CD4-positive, alpha-beta memory T cell (primary cell): ENCODE measurements at regions of chr5 and their contacts with region 1.

Region 1: DNA sequence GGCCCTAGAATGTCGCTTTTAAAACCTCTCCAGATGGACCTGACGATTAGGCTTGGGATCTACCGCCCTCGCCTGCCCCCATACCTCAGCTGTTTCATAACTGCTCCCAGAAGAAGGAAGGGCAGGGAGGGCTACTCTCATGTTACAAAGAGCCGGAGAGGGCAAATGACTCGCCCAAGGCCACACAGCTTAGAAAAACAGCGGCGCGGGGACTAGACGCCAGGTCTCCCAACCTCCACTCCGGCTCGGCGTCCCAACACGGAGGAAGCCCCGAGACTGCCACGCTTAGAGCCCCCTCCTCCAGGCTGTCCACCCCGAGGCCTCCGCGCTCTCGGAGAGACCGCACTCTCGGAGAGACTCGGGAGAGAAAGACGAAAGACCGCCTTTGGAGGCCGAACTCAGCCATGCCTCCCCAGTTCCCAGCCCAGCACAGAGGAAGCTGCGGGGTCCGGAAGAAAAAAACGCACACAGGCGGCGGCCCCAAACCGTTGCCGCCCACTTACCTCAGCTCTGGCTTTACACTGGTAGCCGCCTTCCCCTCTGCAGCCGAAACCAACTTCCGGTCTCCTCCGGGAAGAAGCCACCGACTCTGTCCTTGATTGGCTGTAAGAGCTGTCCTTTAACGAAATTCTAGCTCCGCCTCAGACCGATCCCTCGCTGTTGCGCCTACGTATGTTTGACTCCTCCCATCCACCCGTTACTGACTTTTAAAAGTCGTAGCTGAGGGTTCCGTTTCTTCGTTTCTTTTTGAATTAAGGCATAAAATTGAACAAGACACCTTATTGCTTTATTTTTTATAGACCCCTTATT is at the start of gene MED7:
- DNase-seq: peak; percentile 94 to 98 (median 97)
- H3K4me3 ChIP-seq: peak within 1 kb of the TSS; percentile 92 to 94
- H3K4me3 Mint-ChIP-seq: peak within 1 kb of the TSS; percentile 94 to 100 (median 98)
- H3K27ac ChIP-seq: peak within 1 kb of the TSS; percentile 98
- H3K27ac Mint-ChIP-seq: peak within 1 kb of the TSS; percentile 94 to 100 (median 99)
- H3K4me1 ChIP-seq: peaks cover 28% of the 10 kb centered on the region
- H3K4me1 Mint-ChIP-seq: peaks cover 29 to 61% (median 39%) of the 10 kb centered on the region in 4 donors
- H3K27me3 ChIP-seq: no peaks in the 10 kb centered on the region
- H3K27me3 Mint-ChIP-seq: no peaks in the 10 kb centered on the region
- total RNA-seq, gene MED7: 18.9 to 20.3 TPM

Region 2: GRCh38 chr5:157033071-157033583 is 109.4 kb before region 1 on chr5:
- CTCF ChIA-PET with region 1: no interaction called
- POLR2A ChIA-PET with region 1: no interaction called
- intact Hi-C with region 1: no loop called
- DNase-seq: no peak
- H3K4me3 ChIP-seq: no peak overlapping the region
- H3K4me3 Mint-ChIP-seq: no peak overlapping the region
- H3K27ac ChIP-seq: no peak overlapping the region
- H3K27ac Mint-ChIP-seq: peak overlapping the region in 1 of 7 donors; percentile 73
- H3K4me1 ChIP-seq: peaks cover 3% of the 10 kb centered on the region
- H3K4me1 Mint-ChIP-seq: peaks cover 3 to 9% (median 6%) of the 10 kb centered on the region in 4 donors
- H3K27me3 ChIP-seq: no peaks in the 10 kb centered on the region
- H3K27me3 Mint-ChIP-seq: no peaks in the 10 kb centered on the region

Region 3: GRCh38 chr5:157072508-157072907 is 70.0 kb before region 1 on chr5:
- CTCF ChIA-PET with region 1: no interaction called
- POLR2A ChIA-PET with region 1: no interaction called
- intact Hi-C with region 1: no loop called
- DNase-seq: no peak
- H3K4me3 ChIP-seq: no peak overlapping the region
- H3K4me3 Mint-ChIP-seq: no peak overlapping the region
- H3K27ac ChIP-seq: no peak overlapping the region
- H3K27ac Mint-ChIP-seq: no peak overlapping the region
- H3K4me1 ChIP-seq: no peaks in the 10 kb centered on the region
- H3K4me1 Mint-ChIP-seq: no peaks in the 10 kb centered on the region
- H3K27me3 ChIP-seq: no peaks in the 10 kb centered on the region
- H3K27me3 Mint-ChIP-seq: no peaks in the 10 kb centered on the region

Region 4: DNA sequence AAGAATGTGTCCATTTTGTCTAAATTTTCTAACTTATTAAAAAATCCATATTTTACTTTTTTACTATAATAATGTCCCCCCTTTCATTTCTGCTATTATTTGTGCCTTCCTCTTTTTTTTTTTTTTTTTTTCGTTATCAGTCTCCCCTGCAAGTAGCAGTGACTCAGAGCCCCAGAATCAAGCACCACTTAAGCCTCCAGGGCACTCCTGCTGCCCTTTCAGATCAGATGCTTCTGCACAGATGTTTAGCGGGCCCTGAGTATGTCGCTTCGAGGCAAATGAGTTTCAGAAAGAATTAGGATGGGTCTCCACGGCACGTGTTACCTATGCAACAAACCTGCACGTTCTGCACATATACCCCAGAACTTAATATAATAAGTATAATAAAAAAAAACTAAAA is 11.6 kb before region 1 on chr5:
- CTCF ChIA-PET with region 1: interaction called, 12 read pairs
- POLR2A ChIA-PET with region 1: interaction called, 14 read pairs
- intact Hi-C with region 1: no loop called
- DNase-seq: no peak
- H3K4me3 ChIP-seq: no peak overlapping the region
- H3K4me3 Mint-ChIP-seq: no peak overlapping the region
- H3K27ac ChIP-seq: no peak overlapping the region
- H3K27ac Mint-ChIP-seq: no peak overlapping the region
- H3K4me1 ChIP-seq: no peaks in the 10 kb centered on the region
- H3K4me1 Mint-ChIP-seq: peaks cover 6 to 21% (median 9%) of the 10 kb centered on the region in 4 donors
- H3K27me3 ChIP-seq: no peaks in the 10 kb centered on the region
- H3K27me3 Mint-ChIP-seq: no peaks in the 10 kb centered on the region

Region 5: DNA sequence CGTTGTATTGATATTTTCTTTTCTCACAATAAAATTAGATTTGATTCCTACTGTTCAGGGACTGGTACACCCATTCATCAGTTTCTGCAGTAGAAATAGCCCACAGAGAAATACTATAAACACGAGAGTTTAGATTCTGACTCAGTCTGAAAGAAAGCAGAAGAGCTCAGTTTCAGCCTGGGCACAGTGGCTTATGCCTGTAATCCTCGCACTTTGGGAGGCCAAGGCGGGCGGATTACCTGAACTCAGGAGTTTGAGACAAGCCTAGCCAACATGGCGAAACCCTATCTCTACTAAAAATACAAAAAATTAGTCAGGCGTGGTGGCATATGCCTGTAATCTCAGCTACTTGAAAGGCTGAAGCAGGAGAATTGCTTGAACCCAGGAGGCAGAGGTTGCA is 46.7 kb after region 1 on chr5:
- CTCF ChIA-PET with region 1: interaction called, 66 read pairs
- POLR2A ChIA-PET with region 1: interaction called, 51 read pairs
- intact Hi-C with region 1: no loop called
- DNase-seq: no peak
- H3K4me3 ChIP-seq: peak overlapping the region; percentile 44 to 59
- H3K4me3 Mint-ChIP-seq: peak overlapping the region; percentile 84 to 100 (median 96)
- H3K27ac ChIP-seq: peak overlapping the region; percentile 64
- H3K27ac Mint-ChIP-seq: peak overlapping the region; percentile 84 to 97 (median 93)
- H3K4me1 ChIP-seq: peaks cover 97% of the 10 kb centered on the region
- H3K4me1 Mint-ChIP-seq: peaks cover 66 to 91% (median 78%) of the 10 kb centered on the region in 4 donors
- H3K27me3 ChIP-seq: no peaks in the 10 kb centered on the region
- H3K27me3 Mint-ChIP-seq: no peaks in the 10 kb centered on the region

Region 6: GRCh38 chr5:157219491-157220271 is 77.2 kb after region 1 on chr5:
- CTCF ChIA-PET with region 1: interaction called, 35 read pairs
- POLR2A ChIA-PET with region 1: interaction called, 24 read pairs
- intact Hi-C with region 1: no loop called
- DNase-seq: no peak
- H3K4me3 ChIP-seq: no peak overlapping the region
- H3K4me3 Mint-ChIP-seq: peak overlapping the region in 7 of 8 donors; percentile 57 to 76 (median 67)
- H3K27ac ChIP-seq: peak overlapping the region; percentile 44
- H3K27ac Mint-ChIP-seq: peak overlapping the region; percentile 87 to 96 (median 93)
- H3K4me1 ChIP-seq: peaks cover 98% of the 10 kb centered on the region
- H3K4me1 Mint-ChIP-seq: peaks cover 71 to 85% (median 81%) of the 10 kb centered on the region in 4 donors
- H3K27me3 ChIP-seq: no peaks in the 10 kb centered on the region
- H3K27me3 Mint-ChIP-seq: no peaks in the 10 kb centered on the region

Region 7: GRCh38 chr5:157265714-157266285 is 123.3 kb after region 1 on chr5 and contains the start of gene CYFIP2:
- CTCF ChIA-PET with region 1: interaction called, 4 read pairs
- POLR2A ChIA-PET with region 1: interaction called, 11 read pairs
- intact Hi-C with region 1: loop called (anchors 2 kb)
- DNase-seq: peak; percentile 84 to 88 (median 85)
- H3K4me3 ChIP-seq: peak within 1 kb of the TSS; percentile 62 to 75
- H3K4me3 Mint-ChIP-seq: peak within 1 kb of the TSS; percentile 95 to 100 (median 97)
- H3K27ac ChIP-seq: peak within 1 kb of the TSS; percentile 78
- H3K27ac Mint-ChIP-seq: peak within 1 kb of the TSS; percentile 97 to 99 (median 98)
- H3K4me1 ChIP-seq: peaks cover 65% of the 10 kb centered on the region
- H3K4me1 Mint-ChIP-seq: peaks cover 48 to 82% (median 66%) of the 10 kb centered on the region in 4 donors
- H3K27me3 ChIP-seq: no peaks in the 10 kb centered on the region
- H3K27me3 Mint-ChIP-seq: no peaks in the 10 kb centered on the region
- total RNA-seq, gene CYFIP2: 317 to 325 TPM

Region 8: DNA sequence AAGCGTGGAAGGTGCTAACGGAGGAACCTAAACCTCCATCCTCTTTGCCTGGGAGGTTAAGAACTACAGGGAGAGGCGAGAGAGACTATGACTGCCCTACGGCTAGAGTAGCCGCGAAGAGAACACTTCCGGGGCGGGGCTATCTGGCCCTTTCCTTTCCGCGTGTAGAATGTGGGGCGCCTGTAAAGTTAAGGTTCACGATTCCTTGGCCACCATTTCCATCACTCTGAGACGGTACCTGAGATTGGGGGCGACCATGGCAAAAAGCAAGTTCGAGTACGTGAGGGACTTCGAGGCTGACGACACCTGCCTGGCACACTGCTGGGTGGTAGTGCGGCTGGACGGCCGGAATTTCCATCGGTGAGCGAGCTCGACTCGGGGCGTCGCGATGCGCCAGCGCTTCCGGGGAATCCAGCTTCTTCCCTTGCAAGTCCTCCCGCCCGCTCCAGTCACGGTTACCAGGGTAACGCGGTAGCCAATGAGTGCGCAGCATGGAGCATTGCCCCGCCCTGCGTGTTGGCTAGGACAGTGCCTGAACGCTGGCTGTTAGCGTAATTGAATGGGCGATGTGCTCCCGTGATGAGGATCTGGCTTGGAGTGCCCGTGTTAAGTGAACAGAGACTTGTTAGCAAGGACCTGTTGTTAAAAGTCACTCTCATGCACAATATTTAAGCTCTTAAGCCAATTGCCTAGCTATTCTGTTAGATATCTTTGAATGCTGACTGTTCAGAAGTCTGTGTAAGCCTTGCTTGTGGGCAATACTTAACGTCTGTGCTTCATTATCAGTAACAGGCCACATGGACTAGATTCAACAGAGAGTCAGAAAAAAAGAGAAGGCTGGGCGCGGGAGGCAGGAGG is 589.0 kb after region 1 on chr5 and contains the start of gene THG1L:
- CTCF ChIA-PET with region 1: no interaction called
- POLR2A ChIA-PET with region 1: interaction called, 11 read pairs
- intact Hi-C with region 1: no loop called
- DNase-seq: peak; percentile 95 to 98 (median 96)
- H3K4me3 ChIP-seq: peak within 1 kb of the TSS; percentile 79 to 90
- H3K4me3 Mint-ChIP-seq: peak within 1 kb of the TSS; percentile 94 to 100 (median 98)
- H3K27ac ChIP-seq: peak within 1 kb of the TSS; percentile 82
- H3K27ac Mint-ChIP-seq: peak within 1 kb of the TSS; percentile 94 to 99 (median 97)
- H3K4me1 ChIP-seq: peaks cover 10% of the 10 kb centered on the region
- H3K4me1 Mint-ChIP-seq: peaks cover 11 to 24% (median 18%) of the 10 kb centered on the region in 4 donors
- H3K27me3 ChIP-seq: no peaks in the 10 kb centered on the region
- H3K27me3 Mint-ChIP-seq: no peaks in the 10 kb centered on the region
- total RNA-seq, gene THG1L: 9.1 to 10.5 TPM